ENCODE measurements at regions of chr12 and their contacts with region 1.

Region 1: GRCh38 chr12:30695199-30696103 is at the start of gene IPO8:
- DNase-seq: peak; percentile 75
- H3K4me3 Mint-ChIP-seq: peak within 1 kb of the TSS; percentile 91
- H3K27ac Mint-ChIP-seq: peak within 1 kb of the TSS; percentile 88
- H3K4me1 Mint-ChIP-seq: peaks cover 30% of the 10 kb centered on the region
- H3K27me3 Mint-ChIP-seq: peaks cover 8% of the 10 kb centered on the region
- total RNA-seq, gene IPO8: 40.1 and 44.3 TPM in 2 replicates

Region 2: DNA sequence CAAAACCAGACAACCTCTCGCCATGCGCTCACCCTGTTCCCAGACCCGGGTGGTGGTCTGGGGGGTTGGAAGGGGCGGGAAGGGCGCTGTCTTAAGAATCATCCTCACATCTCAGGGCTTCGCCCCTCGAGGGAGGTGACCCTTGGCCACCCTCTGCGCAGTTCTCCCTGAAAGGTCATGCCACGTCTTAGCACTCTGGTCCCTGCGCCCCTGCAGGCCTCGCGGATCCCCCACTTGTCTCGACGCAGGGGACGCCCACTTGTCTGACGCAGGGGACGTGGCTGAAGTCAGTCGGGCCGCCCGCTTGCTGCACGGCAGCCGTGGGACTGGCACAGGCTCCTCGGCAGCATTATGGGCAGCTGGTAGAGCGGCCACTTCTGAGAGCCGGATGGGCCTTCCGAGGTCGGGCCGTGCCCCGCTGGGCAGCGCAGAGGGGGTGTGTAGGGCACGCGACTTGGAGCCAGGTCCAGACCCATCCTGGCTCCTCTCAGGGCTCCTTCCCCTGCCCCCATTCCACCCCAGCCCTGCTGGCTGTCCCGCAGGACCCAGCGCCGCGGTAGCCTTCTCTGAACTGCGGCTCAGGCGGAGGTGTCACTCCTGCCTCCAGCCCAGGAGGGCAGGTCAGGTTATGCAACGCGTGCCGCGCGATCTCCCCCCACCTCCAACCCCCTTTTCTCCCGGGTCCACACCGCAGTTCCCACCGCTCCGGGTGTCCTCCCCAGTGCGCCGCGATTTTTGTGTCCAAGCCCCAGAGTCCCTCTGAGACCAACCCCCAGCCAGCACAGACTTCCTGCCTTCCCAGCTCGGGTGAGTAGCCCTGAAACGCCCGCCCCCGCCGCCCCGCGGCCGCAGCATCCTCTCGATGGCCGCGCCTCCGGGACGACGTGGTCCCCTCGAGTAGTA is 100.2 kb after region 1 on chr12:
- intact Hi-C with region 1: loop called (anchors 1 kb)
- DNase-seq: peak; percentile 54
- H3K4me3 Mint-ChIP-seq: peak overlapping the region; percentile 82
- H3K27ac Mint-ChIP-seq: peak overlapping the region; percentile 85
- H3K4me1 Mint-ChIP-seq: peaks cover 22% of the 10 kb centered on the region
- H3K27me3 Mint-ChIP-seq: peaks cover 28% of the 10 kb centered on the region

Measured in activated T-helper 2 cell treated with anti-CD3 and anti-CD28 coated beads, Interferon-gamma antibody, Interleukin-2, Interleukin-4, amounts not matched to agents 10 μg/mL and 5 μg/mL and 100 μg/mL, durations not matched to agents 14 hours and 24 hours and 36 hours (primary cell).